ENCODE measurements at regions of chr6 and their contacts with region 1.

Region 1: GRCh38 chr6:74409447-74409846 is 713.4 kb downstream of the CD109 start:
- DNase-seq: no peak
- ATAC-seq: peak; percentile 92
- H3K4me3 ChIP-seq: no peak overlapping the region
- H3K27ac ChIP-seq: no peak overlapping the region
- H3K4me1 ChIP-seq: no peaks in the 10 kb centered on the region
- H3K27me3 ChIP-seq: no peaks in the 10 kb centered on the region
- CTCF ChIP-seq: peak; percentile 18 to 65 (median 24); a peak in 4 of 6 replicates
- EP300 ChIP-seq: no peak
- POLR2A ChIP-seq: no peak
- RAD21 ChIP-seq: peak; percentile 90

Region 2: DNA sequence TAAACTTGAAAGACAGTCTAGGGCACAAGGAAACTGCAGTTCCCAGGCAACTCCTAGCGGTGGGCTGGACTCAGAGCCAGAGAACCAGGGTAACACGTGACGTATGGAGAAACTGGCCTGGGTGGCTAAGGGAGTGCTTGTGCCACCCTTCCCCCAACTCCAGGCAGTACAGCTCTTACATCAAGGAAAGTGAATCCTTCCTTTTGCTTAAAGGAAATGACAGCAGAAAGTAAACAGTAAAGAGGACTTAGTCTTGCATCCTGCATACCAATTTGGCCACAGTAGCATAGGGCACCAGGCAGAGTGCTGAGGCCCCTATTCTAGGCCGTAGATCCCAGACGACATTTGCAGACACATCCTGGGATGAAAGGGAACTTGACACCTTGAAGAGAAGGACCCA is 390.6 kb before region 1 on chr6:
- CTCF ChIA-PET with region 1: no interaction called
- POLR2A ChIA-PET with region 1: no interaction called
- RAD21 ChIA-PET with region 1: no interaction called
- SMC1A ChIA-PET with region 1: no interaction called
- in situ Hi-C with region 1: no loop called
- intact Hi-C with region 1: no loop called
- DNase-seq: no peak
- ATAC-seq: no peak
- H3K4me3 ChIP-seq: no peak overlapping the region
- H3K27ac ChIP-seq: no peak overlapping the region
- H3K4me1 ChIP-seq: no peaks in the 10 kb centered on the region
- H3K27me3 ChIP-seq: no peaks in the 10 kb centered on the region
- CTCF ChIP-seq: no peak
- EP300 ChIP-seq: no peak
- POLR2A ChIP-seq: no peak
- RAD21 ChIP-seq: no peak

Region 3: DNA sequence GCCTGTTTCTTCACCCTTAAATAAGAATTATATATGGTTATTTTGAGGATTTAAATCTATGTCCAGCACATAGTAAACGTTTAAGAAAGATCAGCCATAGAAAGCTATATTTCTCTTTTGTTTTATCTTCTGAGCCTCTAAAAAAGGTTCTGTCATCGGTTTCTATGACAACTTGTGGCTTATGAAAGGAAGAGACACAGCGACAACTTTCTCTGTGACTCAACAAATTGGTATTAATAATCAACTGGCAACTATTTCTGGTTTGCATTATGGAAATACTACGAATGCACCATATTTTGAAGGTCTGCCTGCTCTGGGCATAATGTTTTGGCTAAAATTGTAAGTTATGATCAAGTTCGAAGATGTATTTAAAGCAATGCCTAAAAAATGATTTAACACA is 37.6 kb after region 1 on chr6:
- CTCF ChIA-PET with region 1: interaction called, 3 read pairs
- POLR2A ChIA-PET with region 1: no interaction called
- RAD21 ChIA-PET with region 1: interaction called, 10 read pairs
- SMC1A ChIA-PET with region 1: interaction called, 5 read pairs
- in situ Hi-C with region 1: no loop called
- intact Hi-C with region 1: no loop called
- DNase-seq: peak; percentile 27
- ATAC-seq: peak; percentile 87
- H3K4me3 ChIP-seq: no peak overlapping the region
- H3K27ac ChIP-seq: no peak overlapping the region
- H3K4me1 ChIP-seq: no peaks in the 10 kb centered on the region
- H3K27me3 ChIP-seq: no peaks in the 10 kb centered on the region
- CTCF ChIP-seq: no peak
- EP300 ChIP-seq: peak in 1 of 2 experiments; percentile 41; a peak in 2 of 4 replicates
- POLR2A ChIP-seq: no peak
- RAD21 ChIP-seq: no peak

Region 4: GRCh38 chr6:74568861-74569260 is 159.4 kb after region 1 on chr6:
- CTCF ChIA-PET with region 1: interaction called, 45 read pairs
- POLR2A ChIA-PET with region 1: no interaction called
- RAD21 ChIA-PET with region 1: interaction called, 19 read pairs
- SMC1A ChIA-PET with region 1: interaction called, 11 read pairs
- in situ Hi-C with region 1: no loop called
- intact Hi-C with region 1: loop called (anchors 2 kb)
- DNase-seq: no peak
- ATAC-seq: no peak
- H3K4me3 ChIP-seq: no peak overlapping the region
- H3K27ac ChIP-seq: no peak overlapping the region
- H3K4me1 ChIP-seq: no peaks in the 10 kb centered on the region
- H3K27me3 ChIP-seq: no peaks in the 10 kb centered on the region
- CTCF ChIP-seq: no peak
- EP300 ChIP-seq: no peak
- POLR2A ChIP-seq: no peak
- RAD21 ChIP-seq: no peak

Region 5: DNA sequence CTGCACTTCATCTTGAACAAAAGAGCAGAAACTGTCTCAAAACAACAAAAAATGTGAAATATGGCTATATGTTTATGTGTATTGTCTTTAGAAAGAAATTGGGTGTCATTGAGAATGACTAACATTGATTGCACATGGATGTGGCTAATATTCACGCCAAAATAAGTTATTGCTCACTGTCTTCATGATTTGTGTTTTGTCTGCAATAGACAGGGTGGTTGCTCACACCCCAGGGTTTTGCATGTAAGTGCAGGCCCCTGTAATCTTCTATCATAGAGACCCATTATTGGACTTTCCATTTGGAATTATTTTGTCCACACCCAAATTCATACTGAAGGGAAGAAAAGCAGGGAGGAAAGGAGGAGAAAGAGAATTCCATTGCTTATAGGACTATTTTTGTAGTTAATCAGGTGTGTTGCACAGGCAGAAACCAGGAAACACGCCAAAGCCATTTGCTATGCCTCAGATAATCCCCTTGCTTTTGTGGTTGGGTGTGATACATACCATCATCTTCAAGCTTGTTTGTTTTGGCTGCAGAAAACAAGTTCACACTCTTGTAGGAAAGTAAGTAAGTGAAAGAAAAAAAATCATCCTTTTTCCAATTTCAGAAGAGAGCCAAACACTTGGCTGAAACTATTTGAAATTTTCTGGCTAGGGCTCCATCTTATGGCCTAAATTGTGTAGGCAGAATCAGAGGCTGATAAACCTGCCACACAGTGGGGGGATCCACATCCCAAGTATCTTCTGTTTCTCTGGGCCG is 582.3 kb after region 1 on chr6:
- CTCF ChIA-PET with region 1: no interaction called
- POLR2A ChIA-PET with region 1: no interaction called
- RAD21 ChIA-PET with region 1: interaction called, 4 read pairs
- SMC1A ChIA-PET with region 1: no interaction called
- in situ Hi-C with region 1: no loop called
- intact Hi-C with region 1: loop called (anchors 5 kb)
- DNase-seq: no peak
- ATAC-seq: no peak
- H3K4me3 ChIP-seq: no peak overlapping the region
- H3K27ac ChIP-seq: no peak overlapping the region
- H3K4me1 ChIP-seq: no peaks in the 10 kb centered on the region
- H3K27me3 ChIP-seq: no peaks in the 10 kb centered on the region
- CTCF ChIP-seq: no peak
- EP300 ChIP-seq: no peak
- POLR2A ChIP-seq: no peak
- RAD21 ChIP-seq: no peak